Cardiac septum (tissue), 1 donor: ENCODE measurements at regions of chr13 and their contacts with region 1.

Region 1: GRCh38 chr13:49272296-49272695 is 24.6 kb downstream of the CDADC1 start:
- DNase-seq: no peak

Region 2: GRCh38 chr13:49108196-49108595 is 164.1 kb before region 1 on chr13:
- intact Hi-C with region 1: loop called (anchors 10 kb)
- DNase-seq: no peak